ENCODE measurements at regions of chr4 and their contacts with region 1.

Region 1: GRCh38 chr4:23947826-23948225 is 58.0 kb upstream of the PPARGC1A start:
- DNase-seq: no peak
- ATAC-seq: no peak
- H3K4me3 ChIP-seq: no peak overlapping the region
- H3K27ac ChIP-seq: no peak overlapping the region
- H3K4me1 ChIP-seq: no peaks in the 10 kb centered on the region
- H3K27me3 ChIP-seq: no peaks in the 10 kb centered on the region
- CTCF ChIP-seq: no peak
- EP300 ChIP-seq: no peak
- POLR2A ChIP-seq: no peak
- RAD21 ChIP-seq: no peak

Region 2: GRCh38 chr4:23969635-23970145 is 21.9 kb after region 1 on chr4:
- CTCF ChIA-PET with region 1: no interaction called
- POLR2A ChIA-PET with region 1: no interaction called
- in situ Hi-C with region 1: no loop called
- intact Hi-C with region 1: loop called (anchors 1 kb)
- DNase-seq: no peak
- ATAC-seq: no peak
- H3K4me3 ChIP-seq: no peak overlapping the region
- H3K27ac ChIP-seq: no peak overlapping the region
- H3K4me1 ChIP-seq: no peaks in the 10 kb centered on the region
- H3K27me3 ChIP-seq: no peaks in the 10 kb centered on the region
- CTCF ChIP-seq: no peak
- EP300 ChIP-seq: no peak
- POLR2A ChIP-seq: no peak
- RAD21 ChIP-seq: no peak

Measured in K562 (cell line).